ENCODE measurements at regions of chr3 and their contacts with region 1.

Region 1: GRCh38 chr3:8970971-8971589 is 7.8 kb upstream of the RAD18 start:
- DNase-seq: peak; percentile 78
- H3K4me3 ChIP-seq: no peak overlapping the region
- H3K27ac ChIP-seq: no peak overlapping the region
- H3K4me1 ChIP-seq: peaks cover 0 to 6% (median 0%) of the 10 kb centered on the region in 6 donors
- H3K27me3 ChIP-seq: peaks cover 0 to 23% (median 0%) of the 10 kb centered on the region in 7 donors
- CTCF ChIP-seq: peak; percentile 90 to 97 (median 93)
- POLR2A ChIP-seq: no peak

Region 2: GRCh38 chr3:9302425-9303181 is 331.5 kb after region 1 on chr3:
- intact Hi-C with region 1: loop called (anchors 5 kb)
- DNase-seq: peak; percentile 93
- H3K4me3 ChIP-seq: peak overlapping the region in 1 of 8 donors; percentile 44
- H3K27ac ChIP-seq: no peak overlapping the region
- H3K4me1 ChIP-seq: peaks cover 0 to 9% (median 6%) of the 10 kb centered on the region in 6 donors
- H3K27me3 ChIP-seq: peaks cover 0 to 8% (median 0%) of the 10 kb centered on the region in 7 donors
- CTCF ChIP-seq: peak; percentile 66 to 90 (median 81)
- POLR2A ChIP-seq: no peak

Measured in spleen (tissue), 13 donors.